ENCODE measurements at regions of chr18 and their contacts with region 1.

Region 1: DNA sequence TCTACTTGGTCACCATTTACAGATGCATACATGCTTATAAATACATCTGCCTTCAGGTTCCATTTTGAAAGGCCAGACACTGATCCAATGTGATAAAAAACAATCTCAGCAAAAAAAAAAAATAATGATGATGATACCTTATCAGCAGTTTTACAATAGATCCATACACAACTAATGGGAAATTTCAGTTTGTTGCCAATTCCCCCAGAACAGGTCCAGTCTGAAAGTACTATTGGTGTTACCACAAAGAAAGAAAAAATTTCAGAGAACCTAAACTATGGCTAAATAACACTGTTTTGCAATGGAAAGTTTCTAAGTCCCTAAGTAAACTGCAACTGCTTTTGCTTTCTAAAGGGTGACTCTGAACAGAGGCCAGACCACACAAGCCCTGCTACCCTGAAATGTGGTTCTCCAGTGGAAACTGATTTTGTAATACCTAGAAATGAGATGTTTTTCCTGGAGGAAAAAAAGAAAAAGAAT is 54.1 kb downstream of the LPIN2 start:
- DNase-seq: peak; percentile 64
- H3K4me3 Mint-ChIP-seq: peak overlapping the region; percentile 62
- H3K27ac Mint-ChIP-seq: peak overlapping the region; percentile 100
- H3K4me1 Mint-ChIP-seq: peaks cover 92% of the 10 kb centered on the region
- H3K27me3 Mint-ChIP-seq: no peaks in the 10 kb centered on the region

Region 2: GRCh38 chr18:2641638-2642037 is 317.2 kb before region 1 on chr18:
- CTCF ChIA-PET with region 1: no interaction called
- POLR2A ChIA-PET with region 1: no interaction called
- intact Hi-C with region 1: loop called (anchors 2 kb)
- DNase-seq: no peak
- H3K4me3 Mint-ChIP-seq: peak overlapping the region; percentile 57
- H3K27ac Mint-ChIP-seq: peak overlapping the region; percentile 58
- H3K4me1 Mint-ChIP-seq: peaks cover 52% of the 10 kb centered on the region
- H3K27me3 Mint-ChIP-seq: no peaks in the 10 kb centered on the region

Region 3: DNA sequence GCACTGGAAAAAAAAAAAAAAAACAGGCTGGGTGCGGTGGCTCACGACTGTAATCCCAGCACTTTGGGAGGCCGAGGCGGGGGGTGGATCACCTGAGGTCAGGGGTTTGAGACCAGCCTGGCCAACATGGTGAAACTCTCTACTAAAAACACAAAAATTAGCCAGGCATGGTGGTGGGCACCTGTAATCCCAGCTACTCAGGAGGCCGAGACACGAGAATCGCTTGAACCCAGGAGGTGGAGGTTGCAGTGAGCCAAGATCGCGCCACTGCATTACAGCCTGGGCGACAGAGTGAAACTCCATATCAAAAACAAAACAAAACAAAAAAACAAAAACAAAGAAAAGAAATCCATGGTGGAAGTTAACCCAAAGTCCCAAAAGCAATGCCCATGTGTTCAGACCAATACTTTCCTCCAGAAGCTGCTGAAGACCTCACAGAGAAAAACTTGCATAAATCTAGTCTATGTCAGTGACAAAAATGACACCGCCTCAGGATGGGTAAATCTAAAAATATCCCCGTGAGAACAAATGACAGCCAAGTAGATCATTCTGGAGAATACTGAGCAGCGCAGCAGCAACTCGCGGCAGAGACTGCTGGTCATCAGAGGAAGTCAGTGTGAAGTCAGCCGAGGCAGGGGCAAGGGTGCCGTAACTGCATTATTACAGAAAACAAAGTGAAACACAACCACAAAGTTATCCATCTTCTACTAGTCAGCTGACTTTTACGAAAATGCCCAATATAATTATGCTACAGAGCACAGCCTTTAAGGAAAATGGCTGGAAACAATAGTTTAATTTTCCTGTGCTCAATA is 13.1 kb after region 1 on chr18:
- CTCF ChIA-PET with region 1: interaction called, 16 read pairs
- POLR2A ChIA-PET with region 1: interaction called, 139 read pairs
- intact Hi-C with region 1: loop called (anchors 1 kb)
- DNase-seq: peak; percentile 87
- H3K4me3 Mint-ChIP-seq: peak overlapping the region; percentile 79
- H3K27ac Mint-ChIP-seq: peak overlapping the region; percentile 100
- H3K4me1 Mint-ChIP-seq: peaks cover 92% of the 10 kb centered on the region
- H3K27me3 Mint-ChIP-seq: no peaks in the 10 kb centered on the region

Region 4: GRCh38 chr18:2985628-2986027 is 26.8 kb after region 1 on chr18:
- CTCF ChIA-PET with region 1: interaction called, 70 read pairs
- POLR2A ChIA-PET with region 1: interaction called, 111 read pairs
- intact Hi-C with region 1: loop called (anchors 1 kb)
- DNase-seq: no peak
- H3K4me3 Mint-ChIP-seq: no peak overlapping the region
- H3K27ac Mint-ChIP-seq: peak overlapping the region; percentile 58
- H3K4me1 Mint-ChIP-seq: peaks cover 74% of the 10 kb centered on the region
- H3K27me3 Mint-ChIP-seq: no peaks in the 10 kb centered on the region

Region 5: GRCh38 chr18:3604498-3605408 is 645.9 kb after region 1 on chr18:
- CTCF ChIA-PET with region 1: no interaction called
- POLR2A ChIA-PET with region 1: no interaction called
- intact Hi-C with region 1: loop called (anchors 2 kb)
- DNase-seq: peak; percentile 58
- H3K4me3 Mint-ChIP-seq: no peak overlapping the region
- H3K27ac Mint-ChIP-seq: no peak overlapping the region
- H3K4me1 Mint-ChIP-seq: peaks cover 15% of the 10 kb centered on the region
- H3K27me3 Mint-ChIP-seq: no peaks in the 10 kb centered on the region